Mammary epithelial cell (primary cell): ENCODE measurements at regions of chr12 and their contacts with region 1.

Region 1: DNA sequence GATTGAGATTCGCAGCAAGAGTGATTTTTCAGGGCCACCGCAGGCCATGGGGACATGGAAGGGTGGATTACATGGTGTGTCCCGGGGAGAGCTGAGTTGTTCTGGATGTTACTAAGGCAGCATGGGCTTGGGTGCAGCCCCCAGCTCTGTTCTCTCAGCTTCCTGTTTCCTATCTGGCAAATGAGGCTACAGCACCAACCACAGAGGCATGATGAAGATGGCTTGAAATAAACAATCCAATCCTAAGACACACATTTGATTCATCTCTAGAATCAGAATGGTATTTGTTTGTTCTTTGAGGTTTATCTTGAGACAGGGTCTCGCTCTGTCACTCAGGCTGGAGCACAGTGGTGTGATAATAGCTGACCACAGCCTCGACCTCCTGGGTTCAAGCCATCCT is 21.6 kb downstream of the GLTP start:
- DNase-seq: no peak
- H3K4me3 ChIP-seq: no peak overlapping the region
- H3K27ac ChIP-seq: no peak overlapping the region
- H3K4me1 ChIP-seq: no peaks in the 10 kb centered on the region
- H3K27me3 ChIP-seq: no peaks in the 10 kb centered on the region
- CTCF ChIP-seq: no peak

Region 2: GRCh38 chr12:109899783-109900751 is 41.3 kb after region 1 on chr12 and contains the start of gene TCHP:
- CTCF ChIA-PET with region 1: no interaction called
- dilution Hi-C with region 1: loop called (anchors 5 kb)
- in situ Hi-C with region 1: no loop called
- intact Hi-C with region 1: loop called (anchors 1 kb)
- DNase-seq: peak; percentile 85
- H3K4me3 ChIP-seq: peak within 1 kb of the TSS; percentile 45 to 70 (median 61)
- H3K27ac ChIP-seq: peak within 1 kb of the TSS; percentile 57
- H3K4me1 ChIP-seq: peaks cover 5% of the 10 kb centered on the region
- H3K27me3 ChIP-seq: no peaks in the 10 kb centered on the region
- CTCF ChIP-seq: peak; percentile 23 to 50
- total RNA-seq, gene TCHP: 4.0 to 19.4 TPM

Region 3: GRCh38 chr12:109927622-109928021 is 68.9 kb after region 1 on chr12:
- CTCF ChIA-PET with region 1: no interaction called
- dilution Hi-C with region 1: loop called (anchors 5 kb)
- in situ Hi-C with region 1: loop called in 1 of 2 experiments (anchors 10 kb)
- intact Hi-C with region 1: loop called (anchors 1 kb)
- DNase-seq: no peak
- H3K4me3 ChIP-seq: no peak overlapping the region
- H3K27ac ChIP-seq: no peak overlapping the region
- H3K4me1 ChIP-seq: no peaks in the 10 kb centered on the region
- H3K27me3 ChIP-seq: no peaks in the 10 kb centered on the region
- CTCF ChIP-seq: peak; percentile 79 to 84

Region 4: DNA sequence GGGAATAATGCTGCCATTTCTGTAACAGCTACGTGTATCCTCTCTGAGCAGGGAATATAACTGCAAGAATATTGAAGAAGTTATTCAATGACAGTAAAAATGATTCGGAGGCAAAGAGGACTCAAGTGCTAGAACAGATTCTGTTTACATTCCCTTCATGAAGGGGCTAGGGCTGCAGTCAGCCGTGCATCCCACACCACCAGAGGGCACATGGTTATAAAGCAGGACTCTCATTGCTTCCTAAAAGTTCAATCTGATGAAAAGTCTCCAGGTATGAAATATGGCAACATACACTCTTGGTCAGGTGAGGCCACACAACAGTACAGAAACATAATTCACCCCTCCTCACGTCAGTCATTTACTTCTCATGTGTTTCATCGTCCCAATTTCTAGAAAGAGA is 75.3 kb after region 1 on chr12:
- CTCF ChIA-PET with region 1: no interaction called
- dilution Hi-C with region 1: loop called (anchors 5 kb)
- in situ Hi-C with region 1: loop called in 1 of 2 experiments (anchors 10 kb)
- intact Hi-C with region 1: no loop called
- DNase-seq: no peak
- H3K4me3 ChIP-seq: no peak overlapping the region
- H3K27ac ChIP-seq: no peak overlapping the region
- H3K4me1 ChIP-seq: no peaks in the 10 kb centered on the region
- H3K27me3 ChIP-seq: no peaks in the 10 kb centered on the region
- CTCF ChIP-seq: peak; percentile 9 to 20